ENCODE measurements at regions of chr15 and their contacts with region 1.

Region 1: GRCh38 chr15:65184868-65185738 is at the start of gene CLPX:
- DNase-seq: peak; percentile 73
- H3K4me3 ChIP-seq: peak within 1 kb of the TSS; percentile 96
- H3K27me3 ChIP-seq: no peaks in the 10 kb centered on the region
- CTCF ChIP-seq: no peak
- polyA plus RNA-seq, gene CLPX: 13.3 and 29.7 TPM in 2 replicates

Region 2: DNA sequence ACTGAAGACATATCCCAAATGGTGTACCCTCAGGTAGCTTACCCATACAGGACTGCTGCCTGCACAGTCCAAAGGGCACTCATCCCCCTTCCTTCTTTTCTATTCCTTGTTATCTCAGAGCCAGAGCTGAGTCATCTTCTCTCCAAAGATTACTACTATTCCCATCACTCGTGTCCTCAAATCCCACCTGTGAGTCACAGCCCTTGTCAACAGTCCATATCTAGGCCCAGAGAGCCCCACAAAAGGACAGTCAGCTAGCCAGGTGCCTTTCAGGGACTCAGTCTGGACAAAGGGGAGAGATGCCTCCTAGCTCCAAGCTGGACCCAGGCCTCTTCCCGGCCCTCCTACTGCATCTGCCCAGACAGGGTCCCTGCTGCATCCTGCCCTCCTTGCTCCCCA is 90.6 kb after region 1 on chr15:
- CTCF ChIA-PET with region 1: interaction called, 129 read pairs
- POLR2A ChIA-PET with region 1: interaction called, 9 read pairs
- DNase-seq: no peak
- H3K4me3 ChIP-seq: no peak overlapping the region
- H3K27me3 ChIP-seq: no peaks in the 10 kb centered on the region
- CTCF ChIP-seq: no peak

Region 3: GRCh38 chr15:65298731-65299130 is 113.6 kb after region 1 on chr15:
- CTCF ChIA-PET with region 1: interaction called, 22 read pairs
- POLR2A ChIA-PET with region 1: no interaction called
- DNase-seq: no peak
- H3K4me3 ChIP-seq: no peak overlapping the region
- H3K27me3 ChIP-seq: no peaks in the 10 kb centered on the region
- CTCF ChIP-seq: no peak

Region 4: DNA sequence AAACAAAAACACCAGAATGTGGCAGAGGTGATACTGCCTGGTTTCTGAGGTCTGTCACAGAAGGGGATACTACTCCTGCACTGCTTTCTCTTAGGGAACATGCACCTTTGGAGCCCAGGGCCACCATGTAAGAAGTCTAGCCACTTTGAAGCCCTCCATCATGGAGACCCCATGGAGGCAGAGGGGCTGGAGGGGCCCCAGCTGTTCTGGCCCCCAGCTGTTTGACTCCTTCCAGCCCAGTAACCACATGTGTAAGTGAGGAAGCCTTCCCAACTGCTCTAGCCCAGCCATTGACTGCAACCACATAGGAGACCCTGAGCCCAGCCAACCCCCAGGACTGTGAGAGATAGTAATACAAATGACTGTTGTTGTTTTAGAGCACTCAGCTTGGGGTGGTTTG is 246.6 kb after region 1 on chr15:
- CTCF ChIA-PET with region 1: no interaction called
- POLR2A ChIA-PET with region 1: interaction called, 10 read pairs
- DNase-seq: no peak
- H3K4me3 ChIP-seq: no peak overlapping the region
- H3K27me3 ChIP-seq: no peaks in the 10 kb centered on the region
- CTCF ChIP-seq: no peak

Region 5: GRCh38 chr15:65466901-65467300 is 281.8 kb after region 1 on chr15:
- CTCF ChIA-PET with region 1: no interaction called
- POLR2A ChIA-PET with region 1: interaction called, 13 read pairs
- DNase-seq: no peak
- H3K4me3 ChIP-seq: no peak overlapping the region
- H3K27me3 ChIP-seq: no peaks in the 10 kb centered on the region
- CTCF ChIP-seq: no peak

Measured in BJ (cell line).